CD4-positive, alpha-beta memory T cell (primary cell): ENCODE measurements at regions of chr16 and their contacts with region 1.

Region 1: GRCh38 chr16:1741553-1742165 is 29.7 kb downstream of the NME3 start:
- DNase-seq: no peak
- H3K4me3 ChIP-seq: no peak overlapping the region
- H3K4me3 Mint-ChIP-seq: no peak overlapping the region
- H3K27ac ChIP-seq: no peak overlapping the region
- H3K27ac Mint-ChIP-seq: peak overlapping the region in 1 of 7 donors; percentile 41
- H3K4me1 ChIP-seq: no peaks in the 10 kb centered on the region
- H3K4me1 Mint-ChIP-seq: no peaks in the 10 kb centered on the region
- H3K27me3 ChIP-seq: no peaks in the 10 kb centered on the region
- H3K27me3 Mint-ChIP-seq: no peaks in the 10 kb centered on the region

Region 2: DNA sequence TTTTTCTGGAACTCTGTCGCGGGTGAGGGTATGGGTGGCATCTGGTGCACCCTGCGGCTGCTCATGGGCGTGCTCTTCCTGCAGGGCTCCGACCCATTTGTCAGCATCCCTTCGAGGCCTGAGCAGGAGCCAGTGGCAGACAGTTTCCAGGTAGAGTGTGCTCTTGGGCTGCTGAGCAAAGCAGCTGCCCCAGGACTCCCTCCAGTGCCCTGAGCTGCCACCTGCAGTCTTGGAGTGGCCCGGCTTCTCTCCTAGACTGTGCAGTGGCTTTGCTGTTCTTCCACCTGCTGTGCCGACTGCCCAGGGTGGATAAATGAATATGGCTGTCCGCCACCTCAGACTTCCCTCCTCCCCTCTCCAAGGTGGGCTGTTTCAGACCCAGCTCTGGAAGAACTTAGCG is 74.4 kb before region 1 on chr16:
- CTCF ChIA-PET with region 1: no interaction called
- POLR2A ChIA-PET with region 1: interaction called, 3 read pairs
- intact Hi-C with region 1: loop called (anchors 5 kb)
- DNase-seq: no peak
- H3K4me3 ChIP-seq: no peak overlapping the region
- H3K4me3 Mint-ChIP-seq: no peak overlapping the region
- H3K27ac ChIP-seq: no peak overlapping the region
- H3K27ac Mint-ChIP-seq: no peak overlapping the region
- H3K4me1 ChIP-seq: no peaks in the 10 kb centered on the region
- H3K4me1 Mint-ChIP-seq: no peaks in the 10 kb centered on the region
- H3K27me3 ChIP-seq: no peaks in the 10 kb centered on the region
- H3K27me3 Mint-ChIP-seq: no peaks in the 10 kb centered on the region